Calu3 (cell line): ENCODE measurements at regions of chr9 and their contacts with region 1.

Region 1: GRCh38 chr9:12878356-12878978 is 103.6 kb downstream of the LURAP1L start:
- DNase-seq: no peak
- H3K4me3 Mint-ChIP-seq: peak overlapping the region; percentile 40
- H3K27ac Mint-ChIP-seq: peak overlapping the region; percentile 92
- H3K4me1 Mint-ChIP-seq: peaks cover 44% of the 10 kb centered on the region
- H3K27me3 Mint-ChIP-seq: no peaks in the 10 kb centered on the region
- CTCF ChIP-seq: no peak

Region 2: DNA sequence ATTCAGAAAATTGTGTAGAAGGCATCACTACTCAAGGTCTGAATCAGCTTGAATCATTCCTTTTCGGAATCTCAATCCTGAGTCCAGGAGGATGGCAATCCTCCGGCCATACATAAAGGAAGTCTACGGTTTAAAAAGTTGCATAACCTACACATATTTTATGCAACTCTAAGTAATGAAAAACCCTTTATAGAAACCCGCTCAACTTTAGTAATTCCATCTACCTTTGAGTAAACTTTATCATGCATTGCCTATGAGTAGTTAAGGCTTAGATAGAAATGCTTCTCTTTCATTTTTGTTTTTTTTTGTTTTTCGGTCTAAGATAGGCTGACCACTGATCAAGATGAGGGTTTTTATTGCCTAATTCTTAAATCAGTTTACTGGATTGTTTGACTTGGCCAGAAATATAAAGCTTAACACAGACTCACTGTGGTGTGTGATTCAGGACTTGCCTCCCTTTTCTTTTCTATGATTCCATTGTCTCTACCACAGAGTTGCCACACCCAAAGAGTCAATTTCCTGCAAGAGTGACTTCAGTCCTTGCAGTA is 18.7 kb before region 1 on chr9:
- CTCF ChIA-PET with region 1: interaction called, 3 read pairs
- intact Hi-C with region 1: loop called (anchors 1 kb)
- DNase-seq: peak; percentile 50
- H3K4me3 Mint-ChIP-seq: peak overlapping the region; percentile 58
- H3K27ac Mint-ChIP-seq: peak overlapping the region; percentile 97
- H3K4me1 Mint-ChIP-seq: peaks cover 53% of the 10 kb centered on the region
- H3K27me3 Mint-ChIP-seq: no peaks in the 10 kb centered on the region
- CTCF ChIP-seq: no peak